SK-N-SH (cell line): ENCODE measurements at regions of chr2 and their contacts with region 1.

Region 1: DNA sequence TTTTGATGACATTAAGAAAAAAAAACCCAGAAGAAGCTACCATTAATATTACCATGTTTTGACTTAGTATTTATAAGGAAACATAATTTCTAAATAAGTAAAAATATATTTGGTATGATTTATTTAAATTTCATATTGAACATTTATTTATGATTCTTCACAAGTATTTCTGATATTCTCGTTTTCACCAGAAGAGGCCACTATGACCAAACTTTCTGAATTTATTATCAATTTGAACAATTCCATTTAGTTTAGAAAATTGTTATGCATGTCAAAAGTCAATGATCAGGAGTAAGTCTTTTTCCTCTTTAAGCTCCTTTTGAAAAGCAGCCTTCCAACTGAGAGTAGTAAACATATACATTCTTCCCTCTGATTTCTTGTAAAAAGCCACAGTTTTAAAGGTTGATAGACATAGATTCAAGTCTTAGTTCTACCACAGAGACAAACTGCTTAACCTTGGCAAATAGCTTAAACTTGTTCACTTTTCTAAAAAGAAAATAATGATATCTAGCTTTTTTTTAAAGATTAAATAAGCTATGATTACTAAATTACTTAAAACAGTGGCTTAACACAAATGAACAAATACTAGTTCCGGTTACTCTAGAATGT is 329.9 kb downstream of the TRIB2 start:
- DNase-seq: no peak
- H3K4me3 ChIP-seq: no peak overlapping the region; a peak in 1 of 4 replicates
- H3K27ac ChIP-seq: no peak overlapping the region
- H3K4me1 ChIP-seq: no peaks in the 10 kb centered on the region
- H3K27me3 ChIP-seq: no peaks in the 10 kb centered on the region
- CTCF ChIP-seq: peak; percentile 62
- EP300 ChIP-seq: no peak
- RAD21 ChIP-seq: peak; percentile 75

Region 2: GRCh38 chr2:12081481-12082210 is 965.0 kb before region 1 on chr2:
- CTCF ChIA-PET with region 1: no interaction called
- POLR2A ChIA-PET with region 1: no interaction called
- DNase-seq: no peak
- H3K4me3 ChIP-seq: no peak overlapping the region
- H3K27ac ChIP-seq: no peak overlapping the region
- H3K4me1 ChIP-seq: peaks cover 0 to 26% of the 10 kb centered on the region in 2 experiments
- H3K27me3 ChIP-seq: no peaks in the 10 kb centered on the region
- CTCF ChIP-seq: no peak
- EP300 ChIP-seq: no peak
- RAD21 ChIP-seq: no peak

Region 3: DNA sequence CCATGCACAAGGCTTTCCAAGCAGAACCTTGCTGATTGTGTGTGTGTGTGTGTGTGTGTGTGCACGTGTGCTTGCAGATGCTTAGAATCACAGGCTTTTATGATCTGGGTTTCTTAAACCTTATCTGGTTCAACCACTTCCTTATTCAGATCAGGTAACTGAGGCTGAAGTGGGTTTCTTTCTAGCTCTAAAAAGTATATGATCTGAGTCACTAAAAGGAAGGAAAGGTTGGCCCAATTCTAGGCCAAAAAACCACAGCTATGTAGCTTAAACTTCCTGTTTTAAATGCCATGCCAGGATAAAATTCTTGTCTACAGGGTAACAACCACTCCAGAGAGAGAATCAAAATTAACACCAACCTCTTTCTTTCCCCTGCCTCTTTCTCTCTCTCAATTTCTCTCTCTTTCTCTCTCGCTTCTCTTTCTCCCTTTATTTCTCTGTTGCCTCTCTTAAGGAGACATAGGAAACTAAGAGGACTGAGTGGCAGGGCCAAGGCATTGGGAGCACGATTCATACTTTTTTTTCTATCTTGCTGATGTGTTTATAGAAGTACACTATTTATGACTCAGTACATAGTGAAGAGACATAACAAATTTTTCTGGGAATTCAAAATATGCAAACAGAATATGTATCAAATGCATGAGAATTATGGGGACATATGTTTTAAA is 189.6 kb before region 1 on chr2:
- CTCF ChIA-PET with region 1: no interaction called
- POLR2A ChIA-PET with region 1: no interaction called
- DNase-seq: no peak
- H3K4me3 ChIP-seq: no peak overlapping the region
- H3K27ac ChIP-seq: peak overlapping the region; percentile 80 to 87; a peak in 3 of 4 replicates
- H3K4me1 ChIP-seq: peaks cover 0 to 19% of the 10 kb centered on the region in 2 experiments; a peak in 3 of 4 replicates
- H3K27me3 ChIP-seq: no peaks in the 10 kb centered on the region
- CTCF ChIP-seq: no peak
- EP300 ChIP-seq: peak in 1 of 2 experiments; percentile 68; a peak in 1 of 4 replicates
- RAD21 ChIP-seq: no peak

Region 4: DNA sequence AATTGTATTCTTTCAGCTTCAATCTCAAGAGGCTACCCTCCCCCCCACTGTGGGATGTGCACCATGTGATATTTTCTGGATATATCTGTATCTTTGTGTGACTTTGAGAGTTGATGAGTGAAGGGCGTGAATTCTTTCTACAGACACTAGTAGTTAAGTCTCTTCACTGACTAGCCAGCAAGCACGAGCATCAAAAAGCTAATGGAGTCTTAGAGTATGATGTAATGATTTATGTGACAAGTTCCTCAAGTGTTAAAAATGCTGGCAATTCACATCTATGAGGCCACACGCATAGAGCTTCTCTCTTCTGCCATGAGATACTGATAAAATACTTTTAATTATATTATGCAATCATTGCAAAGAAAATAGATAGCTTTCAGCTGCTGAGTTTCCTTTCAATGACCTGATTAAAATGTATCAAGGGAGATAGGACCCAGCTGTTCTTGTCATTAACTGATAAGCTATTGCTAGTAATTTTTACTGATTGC is 25.1 kb before region 1 on chr2:
- CTCF ChIA-PET with region 1: interaction called, 10 read pairs
- POLR2A ChIA-PET with region 1: no interaction called
- DNase-seq: peak; percentile 34
- H3K4me3 ChIP-seq: no peak overlapping the region
- H3K27ac ChIP-seq: peak overlapping the region in 1 of 2 experiments; percentile 19; a peak in 1 of 4 replicates
- H3K4me1 ChIP-seq: peaks cover 0 to 22% of the 10 kb centered on the region in 2 experiments; a peak in 2 of 4 replicates
- H3K27me3 ChIP-seq: peaks cover 5% of the 10 kb centered on the region
- CTCF ChIP-seq: no peak
- EP300 ChIP-seq: peak; percentile 10 to 98; a peak in 2 of 4 replicates
- RAD21 ChIP-seq: 0 out of 2 replicates have a peak, but pooled peaks have one; percentile 3

Region 5: DNA sequence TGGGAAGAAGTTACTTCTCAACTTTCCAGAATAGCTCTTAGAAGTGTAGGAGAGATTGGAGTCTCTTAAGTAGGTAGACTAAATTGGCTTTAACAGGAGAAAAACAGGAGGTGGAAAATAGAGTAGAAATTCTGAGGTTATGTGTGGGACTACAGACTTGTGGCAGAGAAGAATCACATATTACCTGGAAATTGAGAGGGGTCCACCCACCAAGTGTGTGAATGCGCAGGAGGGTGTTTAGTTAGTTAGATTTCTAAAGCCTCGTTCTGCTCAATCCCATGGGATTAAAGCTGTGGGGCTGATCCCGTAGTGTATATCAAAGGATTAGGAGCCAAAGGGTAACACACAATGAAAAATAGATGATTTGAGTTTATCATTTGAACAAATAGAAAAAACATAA is 10.8 kb before region 1 on chr2:
- CTCF ChIA-PET with region 1: interaction called, 14 read pairs
- POLR2A ChIA-PET with region 1: no interaction called
- DNase-seq: no peak
- H3K4me3 ChIP-seq: no peak overlapping the region
- H3K27ac ChIP-seq: no peak overlapping the region
- H3K4me1 ChIP-seq: no peaks in the 10 kb centered on the region
- H3K27me3 ChIP-seq: no peaks in the 10 kb centered on the region
- CTCF ChIP-seq: no peak
- EP300 ChIP-seq: no peak
- RAD21 ChIP-seq: no peak